Adrenal gland (tissue), 19 donors: ENCODE measurements at regions of chr3 and their contacts with region 1.

Region 1: GRCh38 chr3:172511783-172512762 is 11.2 kb downstream of the TNFSF10 start:
- DNase-seq: peak; percentile 46 to 68 (median 55)
- H3K4me3 ChIP-seq: no peak overlapping the region
- H3K27ac ChIP-seq: peak overlapping the region in 1 of 5 donors; percentile 7
- H3K4me1 ChIP-seq: peaks cover 3 to 17% of the 10 kb centered on the region in 2 donors
- H3K27me3 ChIP-seq: no peaks in the 10 kb centered on the region
- CTCF ChIP-seq: no peak
- POLR2A ChIP-seq: no peak

Region 2: GRCh38 chr3:172562871-172563863 is 51.1 kb after region 1 on chr3:
- intact Hi-C with region 1: loop called in 1 of 2 experiments (anchors 10 kb)
- DNase-seq: peak; percentile 34 to 71 (median 54)
- H3K4me3 ChIP-seq: peak overlapping the region in 2 of 4 donors; percentile 15 to 28
- H3K27ac ChIP-seq: peak overlapping the region; percentile 57 to 94 (median 86)
- H3K4me1 ChIP-seq: peaks cover 25 to 33% of the 10 kb centered on the region in 2 donors
- H3K27me3 ChIP-seq: no peaks in the 10 kb centered on the region
- CTCF ChIP-seq: no peak
- POLR2A ChIP-seq: peak in 1 of 2 donors; percentile 29

Region 3: GRCh38 chr3:172595641-172596393 is 83.7 kb after region 1 on chr3:
- intact Hi-C with region 1: loop called in 1 of 2 experiments (anchors 10 kb)
- DNase-seq: peak in 4 of 7 donors; percentile 39 to 68 (median 45)
- H3K4me3 ChIP-seq: peak overlapping the region in 1 of 4 donors; percentile 51
- H3K27ac ChIP-seq: peak overlapping the region; percentile 43 to 72 (median 67)
- H3K4me1 ChIP-seq: peaks cover 14 to 18% of the 10 kb centered on the region in 2 donors
- H3K27me3 ChIP-seq: no peaks in the 10 kb centered on the region
- CTCF ChIP-seq: peak; percentile 51 to 87 (median 78)
- POLR2A ChIP-seq: no peak